ENCODE measurements at regions of chr10 and their contacts with region 1.

Region 1: GRCh38 chr10:96690755-96691731 is 29.3 kb downstream of the PIK3AP1 start:
- DNase-seq: no peak
- H3K4me3 ChIP-seq: no peak overlapping the region
- H3K27ac ChIP-seq: no peak overlapping the region
- H3K4me1 ChIP-seq: peaks cover 51% of the 10 kb centered on the region
- CTCF ChIP-seq: 0 out of 2 replicates have a peak, but pooled peaks have one; percentile 15

Region 2: DNA sequence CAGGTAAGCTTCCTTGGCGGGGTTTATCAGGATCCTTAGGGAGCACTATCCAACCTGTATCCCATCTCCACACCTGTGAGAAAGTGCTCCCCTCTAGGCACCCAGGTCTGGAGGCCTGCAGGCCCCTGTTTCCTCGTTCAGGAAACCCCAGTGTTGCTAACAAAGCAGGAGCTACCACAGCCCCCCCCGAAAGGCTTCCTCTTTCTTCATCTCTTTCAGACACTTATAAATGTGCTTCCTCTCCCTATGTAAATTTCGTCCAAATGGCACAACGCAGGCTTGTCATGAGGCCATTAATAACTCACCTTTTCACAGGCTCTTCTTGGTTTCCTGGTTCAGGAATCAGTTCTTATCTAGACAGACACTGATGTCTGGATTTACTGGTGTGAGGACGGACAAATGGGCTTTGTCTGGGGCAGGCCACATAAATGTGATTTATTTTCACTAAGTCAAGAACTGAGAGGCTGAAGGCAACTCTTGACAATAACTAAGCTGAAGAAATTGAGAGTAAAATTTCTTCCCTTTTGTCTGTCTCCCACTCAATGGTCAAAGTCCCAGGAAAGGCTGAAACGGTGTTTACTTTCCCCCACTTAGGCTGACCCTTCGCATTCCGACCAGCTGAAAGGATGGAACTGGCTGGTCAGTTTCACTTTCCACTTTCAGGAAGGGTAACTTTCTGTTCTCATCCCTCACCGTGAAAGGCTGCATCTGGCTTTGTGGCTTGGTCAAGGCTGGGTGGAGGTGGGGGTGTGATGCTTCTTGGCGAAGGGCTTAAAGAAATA is 17.5 kb before region 1 on chr10:
- CTCF ChIA-PET with region 1: interaction called, 4 read pairs
- POLR2A ChIA-PET with region 1: interaction called, 28 read pairs
- intact Hi-C with region 1: no loop called
- DNase-seq: peak; percentile 87
- H3K4me3 ChIP-seq: peak overlapping the region; percentile 62
- H3K27ac ChIP-seq: peak overlapping the region; percentile 96
- H3K4me1 ChIP-seq: peaks cover 88% of the 10 kb centered on the region
- CTCF ChIP-seq: no peak

Region 3: DNA sequence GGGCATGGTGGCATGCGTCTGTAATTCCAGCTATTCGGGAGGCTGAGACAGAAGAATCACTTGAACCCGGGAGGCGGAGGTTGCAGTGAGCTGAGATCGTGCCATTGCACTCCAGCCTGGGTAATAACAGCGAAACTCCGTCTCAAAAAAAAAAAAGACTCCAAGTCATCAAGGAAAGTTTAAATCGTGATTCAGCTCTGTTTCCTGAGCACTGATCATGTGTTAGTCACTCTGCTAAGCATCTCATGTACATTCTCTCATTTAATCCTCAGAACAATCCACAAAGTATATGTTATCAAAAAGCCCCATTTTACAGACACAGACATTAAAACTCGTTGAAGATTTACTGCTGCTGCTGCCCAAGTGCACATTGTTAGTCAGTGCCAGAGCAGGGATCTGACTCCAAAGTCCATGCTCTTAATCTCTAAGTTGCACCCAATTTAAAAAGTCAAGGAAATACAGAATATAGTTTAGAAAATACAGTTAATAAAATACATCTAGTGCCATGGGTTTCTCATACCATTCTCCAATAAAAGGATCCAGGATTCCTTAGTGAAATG is 23.1 kb after region 1 on chr10:
- CTCF ChIA-PET with region 1: no interaction called
- POLR2A ChIA-PET with region 1: interaction called, 29 read pairs
- intact Hi-C with region 1: no loop called
- DNase-seq: no peak
- H3K4me3 ChIP-seq: no peak overlapping the region
- H3K27ac ChIP-seq: no peak overlapping the region
- H3K4me1 ChIP-seq: peaks cover 59% of the 10 kb centered on the region
- CTCF ChIP-seq: no peak

Region 4: GRCh38 chr10:96896884-96897589 is 206.0 kb after region 1 on chr10:
- CTCF ChIA-PET with region 1: no interaction called
- POLR2A ChIA-PET with region 1: no interaction called
- intact Hi-C with region 1: no loop called
- DNase-seq: no peak
- H3K4me3 ChIP-seq: no peak overlapping the region
- H3K27ac ChIP-seq: no peak overlapping the region
- H3K4me1 ChIP-seq: no peaks in the 10 kb centered on the region
- CTCF ChIP-seq: no peak